Aorta (tissue), 5 donors: ENCODE measurements at regions of chr4 and their contacts with region 1.

Region 1: GRCh38 chr4:168815379-168816345 is 194.4 kb downstream of the CBR4 start:
- DNase-seq: no peak
- ATAC-seq: peak; percentile 48
- H3K4me3 ChIP-seq: no peak overlapping the region
- H3K27ac ChIP-seq: peak overlapping the region; percentile 76 to 88
- H3K4me1 ChIP-seq: peaks cover 0 to 3% of the 10 kb centered on the region in 2 donors
- H3K27me3 ChIP-seq: no peaks in the 10 kb centered on the region

Region 2: DNA sequence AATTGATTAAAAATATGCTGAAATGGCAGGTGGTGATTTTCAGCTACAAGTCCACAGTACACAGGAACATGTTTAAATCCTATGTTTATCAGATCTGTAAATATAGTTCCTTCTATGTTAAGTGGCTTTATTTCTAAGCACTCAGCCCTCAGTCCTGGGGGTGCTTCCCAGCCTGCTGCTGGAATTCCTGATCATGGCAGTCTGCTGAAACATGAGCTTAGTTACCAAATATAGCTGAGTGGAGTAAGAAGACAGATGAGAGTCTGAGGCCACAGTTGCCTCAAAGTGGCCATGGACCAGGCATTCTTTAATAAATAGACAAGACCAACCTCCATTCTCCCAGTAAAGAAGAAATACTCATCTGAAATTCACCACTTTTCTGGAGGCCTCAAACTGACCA is 480.0 kb before region 1 on chr4:
- intact Hi-C with region 1: no loop called
- DNase-seq: no peak
- ATAC-seq: no peak
- H3K4me3 ChIP-seq: no peak overlapping the region
- H3K27ac ChIP-seq: no peak overlapping the region
- H3K4me1 ChIP-seq: no peaks in the 10 kb centered on the region
- H3K27me3 ChIP-seq: no peaks in the 10 kb centered on the region

Region 3: DNA sequence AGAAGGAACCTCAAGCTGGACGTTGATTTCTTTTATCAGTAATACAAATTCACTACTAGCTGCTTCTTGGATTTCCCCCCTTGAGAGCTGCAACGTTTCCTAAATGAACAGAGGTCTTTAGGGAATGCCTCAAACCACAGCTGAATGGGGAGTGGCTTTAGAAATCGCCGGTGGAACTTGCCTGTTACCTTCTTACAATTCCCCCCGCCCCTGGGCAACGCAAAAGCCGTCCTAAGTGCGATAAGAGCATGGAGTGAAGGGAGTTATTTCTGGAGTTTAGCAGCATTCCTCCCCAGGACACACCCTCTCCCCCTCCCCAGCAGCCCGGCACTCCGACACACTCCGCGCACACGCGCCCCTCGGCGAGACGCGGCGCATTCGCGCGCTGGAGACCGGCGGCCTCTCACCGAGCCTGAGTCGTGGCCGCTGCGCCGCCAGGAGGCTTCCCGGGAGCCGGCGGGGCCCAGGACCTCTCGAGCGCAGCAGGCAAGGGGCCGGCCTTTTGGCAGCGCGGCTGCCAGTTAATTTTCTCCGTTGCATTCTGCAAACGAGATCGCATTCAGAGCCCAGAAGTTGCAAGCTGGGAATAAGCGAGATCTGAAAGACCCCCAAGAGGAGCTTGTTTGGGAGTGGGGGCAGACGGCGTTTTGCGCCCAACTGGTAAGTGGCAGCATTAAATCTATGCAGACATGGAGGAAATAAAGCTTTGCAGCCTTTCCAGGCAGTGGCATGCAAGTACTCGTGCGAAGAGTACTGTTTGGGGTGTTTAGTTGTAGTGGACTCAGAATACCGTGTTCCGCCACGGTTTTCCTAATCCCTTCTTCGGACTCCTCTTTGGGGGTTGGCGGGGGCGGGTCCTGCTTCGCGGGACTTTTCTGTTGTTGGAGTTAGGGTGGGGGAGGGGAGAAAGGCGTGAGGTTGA is 184.2 kb before region 1 on chr4:
- intact Hi-C with region 1: loop called in 1 of 2 experiments (anchors 10 kb)
- DNase-seq: peak; percentile 76 to 90
- ATAC-seq: peak; percentile 89
- H3K4me3 ChIP-seq: peak overlapping the region; percentile 69 to 99
- H3K27ac ChIP-seq: peak overlapping the region; percentile 46 to 79
- H3K4me1 ChIP-seq: peaks cover 1 to 7% of the 10 kb centered on the region in 2 donors
- H3K27me3 ChIP-seq: no peaks in the 10 kb centered on the region

Region 4: GRCh38 chr4:168723020-168723419 is 92.6 kb before region 1 on chr4:
- intact Hi-C with region 1: no loop called
- DNase-seq: no peak
- ATAC-seq: no peak
- H3K4me3 ChIP-seq: no peak overlapping the region
- H3K27ac ChIP-seq: peak overlapping the region in 1 of 2 donors; percentile 17
- H3K4me1 ChIP-seq: peaks cover 2% of the 10 kb centered on the region in 2 donors
- H3K27me3 ChIP-seq: no peaks in the 10 kb centered on the region

Region 5: DNA sequence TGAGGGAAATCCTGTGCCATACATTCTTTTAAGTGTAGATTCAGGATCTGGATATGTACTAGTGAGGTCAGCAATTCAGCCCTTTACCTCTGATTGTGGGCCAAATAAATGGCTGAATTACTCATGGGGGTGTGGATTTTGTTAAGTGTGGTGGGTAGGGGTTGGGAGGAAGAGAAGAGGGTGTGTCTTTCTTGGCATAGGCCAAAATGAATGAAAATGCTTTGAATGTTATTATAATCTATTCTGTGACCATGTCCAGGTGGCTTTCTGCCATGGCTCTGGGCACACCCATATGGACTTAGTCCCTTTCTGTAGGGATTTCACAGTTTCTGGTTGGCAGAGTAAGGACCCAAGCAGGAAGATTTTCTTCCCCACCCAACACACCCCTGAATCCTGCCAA is 49.9 kb before region 1 on chr4:
- intact Hi-C with region 1: loop called in 1 of 2 experiments (anchors 5 kb)
- DNase-seq: peak in 1 of 2 donors; percentile 80
- ATAC-seq: peak; percentile 54
- H3K4me3 ChIP-seq: no peak overlapping the region
- H3K27ac ChIP-seq: peak overlapping the region in 1 of 2 donors; percentile 61
- H3K4me1 ChIP-seq: peaks cover 0 to 6% of the 10 kb centered on the region in 2 donors
- H3K27me3 ChIP-seq: no peaks in the 10 kb centered on the region

Region 6: DNA sequence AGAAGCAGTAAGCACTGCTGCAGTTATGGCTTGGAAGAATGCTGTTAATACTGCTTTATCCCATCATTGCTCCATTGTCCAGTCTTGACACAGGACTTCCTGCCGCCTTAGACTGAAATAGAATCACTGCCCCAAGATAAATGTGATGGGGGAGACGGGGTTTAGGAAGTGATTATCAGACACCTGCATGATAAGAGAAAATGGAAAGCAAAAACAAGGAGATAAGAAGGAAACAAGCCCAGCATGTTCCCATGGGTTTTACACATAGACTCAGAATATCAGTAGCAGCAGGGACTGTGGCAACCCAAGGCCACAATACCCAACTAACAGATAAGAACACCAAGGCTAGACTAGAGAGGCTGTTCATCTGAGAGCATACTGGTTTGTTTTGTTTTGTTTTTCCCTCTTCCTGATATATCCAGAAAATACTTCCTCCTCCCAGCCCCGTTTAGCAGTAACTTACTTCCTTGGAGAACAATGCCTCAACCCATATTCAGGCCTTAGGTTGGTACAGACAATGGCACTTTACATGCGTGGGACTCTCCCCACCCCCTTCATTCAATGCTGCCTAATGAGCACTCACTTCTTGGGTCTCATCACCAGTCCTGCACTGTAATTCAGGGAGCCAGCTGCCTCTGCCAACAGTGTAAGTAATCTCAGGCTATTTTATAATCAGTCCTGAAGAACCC is 38.2 kb before region 1 on chr4:
- intact Hi-C with region 1: loop called in 1 of 2 experiments (anchors 5 kb)
- DNase-seq: no peak
- ATAC-seq: no peak
- H3K4me3 ChIP-seq: no peak overlapping the region
- H3K27ac ChIP-seq: no peak overlapping the region
- H3K4me1 ChIP-seq: no peaks in the 10 kb centered on the region
- H3K27me3 ChIP-seq: no peaks in the 10 kb centered on the region